Mammary epithelial cell (primary cell): ENCODE measurements at regions of chr2 and their contacts with region 1.

Region 1: GRCh38 chr2:98385050-98385699 is 38.9 kb downstream of the CNGA3 start:
- DNase-seq: peak; percentile 64
- H3K4me3 ChIP-seq: no peak overlapping the region
- H3K27ac ChIP-seq: no peak overlapping the region
- H3K4me1 ChIP-seq: no peaks in the 10 kb centered on the region
- H3K27me3 ChIP-seq: peaks cover 9% of the 10 kb centered on the region
- CTCF ChIP-seq: peak; percentile 100

Region 2: GRCh38 chr2:98086491-98087446 is 298.4 kb before region 1 on chr2 and contains the start of gene VWA3B:
- CTCF ChIA-PET with region 1: interaction called, 3 read pairs
- dilution Hi-C with region 1: no loop called
- in situ Hi-C with region 1: no loop called
- intact Hi-C with region 1: loop called (anchors 10 kb)
- DNase-seq: peak; percentile 78
- H3K4me3 ChIP-seq: peak within 1 kb of the TSS; percentile 60 to 87 (median 73)
- H3K27ac ChIP-seq: peak within 1 kb of the TSS; percentile 91
- H3K4me1 ChIP-seq: peaks cover 10% of the 10 kb centered on the region
- H3K27me3 ChIP-seq: no peaks in the 10 kb centered on the region
- CTCF ChIP-seq: no peak
- total RNA-seq, gene VWA3B: 0.66 TPM in 1 of 2 donors, not detected in the other

Region 3: DNA sequence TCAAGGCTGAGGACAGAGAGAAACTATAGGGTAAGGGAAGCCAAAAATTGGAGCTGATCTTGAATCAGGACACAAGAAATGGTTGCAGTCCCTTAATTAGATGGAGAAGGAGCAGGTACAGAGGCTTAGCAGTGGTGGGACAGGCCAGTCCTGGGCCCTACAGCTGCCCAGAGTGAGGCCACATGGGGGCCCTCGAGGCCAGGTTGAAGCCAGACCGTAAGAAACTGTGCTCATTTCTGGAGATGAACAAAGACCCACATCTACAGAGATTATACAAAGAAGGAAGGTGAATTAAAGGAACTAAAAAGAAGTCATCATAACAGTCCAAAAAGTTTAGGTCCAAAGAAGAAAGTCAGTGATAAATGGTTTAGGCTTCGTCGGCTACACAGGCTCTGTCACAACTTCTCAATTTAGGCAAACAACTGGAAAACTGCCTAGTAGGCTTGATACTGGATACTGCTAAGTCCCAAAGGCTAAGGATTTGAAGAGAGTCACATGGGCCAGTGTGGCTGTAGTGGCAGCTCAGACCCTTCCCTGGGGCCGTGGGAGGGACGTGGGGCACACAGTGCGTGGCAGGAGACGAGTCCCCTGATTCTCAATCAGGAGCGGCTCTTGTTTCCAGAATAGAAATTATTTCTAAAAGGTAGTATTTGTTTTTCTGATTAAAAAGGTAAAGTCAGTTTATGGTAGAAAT is 89.3 kb before region 1 on chr2:
- CTCF ChIA-PET with region 1: no interaction called
- dilution Hi-C with region 1: no loop called
- in situ Hi-C with region 1: no loop called
- intact Hi-C with region 1: loop called (anchors 1 kb)
- DNase-seq: no peak
- H3K4me3 ChIP-seq: no peak overlapping the region
- H3K27ac ChIP-seq: no peak overlapping the region
- H3K4me1 ChIP-seq: no peaks in the 10 kb centered on the region
- H3K27me3 ChIP-seq: no peaks in the 10 kb centered on the region
- CTCF ChIP-seq: peak in 1 of 2 donors; percentile 15